ENCODE measurements at regions of chr17 and their contacts with region 1.

Region 1: GRCh38 chr17:13337864-13338371 is 263.8 kb downstream of the HS3ST3A1 start:
- DNase-seq: no peak
- ATAC-seq: no peak
- H3K4me3 ChIP-seq: no peak overlapping the region
- H3K27ac ChIP-seq: no peak overlapping the region
- H3K4me1 ChIP-seq: no peaks in the 10 kb centered on the region
- H3K27me3 ChIP-seq: no peaks in the 10 kb centered on the region
- CTCF ChIP-seq: peak; percentile 48 to 69 (median 60); a peak in 5 of 6 replicates
- EP300 ChIP-seq: no peak
- POLR2A ChIP-seq: no peak
- RAD21 ChIP-seq: peak; percentile 59

Region 2: GRCh38 chr17:14297161-14297851 is 959.4 kb after region 1 on chr17:
- CTCF ChIA-PET with region 1: no interaction called
- POLR2A ChIA-PET with region 1: no interaction called
- RAD21 ChIA-PET with region 1: no interaction called
- SMC1A ChIA-PET with region 1: no interaction called
- in situ Hi-C with region 1: loop called (anchors 25 kb)
- intact Hi-C with region 1: no loop called
- DNase-seq: no peak
- ATAC-seq: no peak
- H3K4me3 ChIP-seq: no peak overlapping the region
- H3K27ac ChIP-seq: no peak overlapping the region
- H3K4me1 ChIP-seq: no peaks in the 10 kb centered on the region; the same call in 1 of the 2 replicates
- H3K27me3 ChIP-seq: peaks cover 7 to 28% of the 10 kb centered on the region in 2 experiments
- CTCF ChIP-seq: no peak
- EP300 ChIP-seq: no peak
- POLR2A ChIP-seq: no peak
- RAD21 ChIP-seq: no peak

Measured in GM12878 (cell line).